ENCODE measurements at regions of chr20 and their contacts with region 1.

Region 1: DNA sequence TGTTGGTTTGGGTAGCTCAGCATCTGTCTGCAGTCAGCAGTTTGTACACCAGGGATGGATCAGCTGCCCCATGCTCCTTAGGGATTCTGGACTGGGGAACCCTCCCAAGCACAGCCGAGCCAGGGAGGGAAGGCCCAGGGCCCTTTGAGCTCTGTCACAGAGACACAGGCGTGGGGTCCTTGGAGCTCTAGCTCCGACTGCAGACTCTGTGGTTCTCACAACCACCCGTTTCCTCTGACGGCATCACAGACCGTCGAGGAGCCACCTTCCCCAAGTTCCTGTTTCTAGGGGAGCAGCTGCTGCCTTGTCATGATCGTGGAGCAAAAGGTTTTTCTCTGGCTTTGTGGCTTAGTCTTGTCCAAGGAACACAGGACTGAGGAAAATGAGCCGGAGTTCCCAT is at the start of gene SLA2:
- DNase-seq: peak; percentile 91
- H3K4me3 Mint-ChIP-seq: peak within 1 kb of the TSS; percentile 98
- H3K27ac Mint-ChIP-seq: peak within 1 kb of the TSS; percentile 98
- H3K4me1 Mint-ChIP-seq: peaks cover 52% of the 10 kb centered on the region
- H3K27me3 Mint-ChIP-seq: no peaks in the 10 kb centered on the region
- total RNA-seq, gene SLA2: 59.0 and 59.6 TPM in 2 replicates

Region 2: DNA sequence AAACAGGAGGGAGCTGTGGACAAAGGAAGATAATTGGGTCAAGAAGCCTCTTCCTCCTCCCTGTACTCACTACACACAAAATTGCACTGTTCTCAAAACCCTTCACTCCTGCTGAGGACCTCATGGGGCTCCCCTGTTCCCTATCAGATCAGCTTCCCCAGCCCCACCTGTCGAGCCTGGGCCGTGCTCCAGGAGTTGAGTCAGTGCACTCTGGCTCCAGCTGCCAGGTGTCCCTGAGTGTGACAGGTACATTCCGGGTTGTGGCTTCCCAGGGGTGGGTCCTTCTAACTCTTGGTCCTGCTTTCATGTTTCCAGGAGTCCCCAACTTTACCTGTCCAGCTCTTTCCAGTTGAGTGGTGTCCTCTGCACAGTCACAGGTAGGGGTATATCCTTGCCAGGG is 32.0 kb before region 1 on chr20:
- intact Hi-C with region 1: loop called (anchors 2 kb)
- DNase-seq: no peak
- H3K4me3 Mint-ChIP-seq: no peak overlapping the region
- H3K27ac Mint-ChIP-seq: no peak overlapping the region
- H3K4me1 Mint-ChIP-seq: peaks cover 11% of the 10 kb centered on the region
- H3K27me3 Mint-ChIP-seq: no peaks in the 10 kb centered on the region

Region 3: GRCh38 chr20:36728986-36729385 is 83.0 kb after region 1 on chr20:
- intact Hi-C with region 1: loop called (anchors 10 kb)
- DNase-seq: peak; percentile 64
- H3K4me3 Mint-ChIP-seq: no peak overlapping the region
- H3K27ac Mint-ChIP-seq: peak overlapping the region; percentile 45
- H3K4me1 Mint-ChIP-seq: peaks cover 18% of the 10 kb centered on the region
- H3K27me3 Mint-ChIP-seq: no peaks in the 10 kb centered on the region